HEK293 (cell line): ENCODE measurements at regions of chr10 and their contacts with region 1.

Region 1: GRCh38 chr10:7121154-7121810 is 289.6 kb downstream of the SFMBT2 start:
- H3K4me3 ChIP-seq: no peak overlapping the region
- H3K27ac ChIP-seq: no peak overlapping the region
- H3K4me1 ChIP-seq: no peaks in the 10 kb centered on the region
- CTCF ChIP-seq: no peak

Region 2: DNA sequence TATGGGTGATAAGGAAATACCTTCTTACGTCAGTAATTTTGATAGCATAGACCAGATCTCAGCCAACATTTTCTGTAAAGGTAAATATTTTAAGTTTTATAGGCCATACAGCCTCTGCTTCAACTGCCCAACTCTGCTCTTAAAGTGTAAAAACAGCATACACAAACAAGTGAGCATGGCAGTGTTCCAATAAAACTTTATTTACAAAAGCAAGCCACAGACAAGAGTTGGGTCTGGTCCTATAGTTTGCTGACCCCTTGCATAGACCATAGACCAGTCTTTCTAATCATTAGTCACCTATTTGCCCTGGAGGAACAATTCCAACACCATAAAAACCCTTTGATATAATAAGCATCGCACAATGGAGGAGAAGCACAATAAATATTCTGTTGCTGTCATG is 109.3 kb before region 1 on chr10:
- CTCF ChIA-PET with region 1: no interaction called
- POLR2A ChIA-PET with region 1: no interaction called
- H3K4me3 ChIP-seq: no peak overlapping the region
- H3K27ac ChIP-seq: no peak overlapping the region
- H3K4me1 ChIP-seq: 0 out of 2 replicates have a peak, but pooled peaks cover 2% of the 10 kb centered on the region
- CTCF ChIP-seq: no peak

Region 3: DNA sequence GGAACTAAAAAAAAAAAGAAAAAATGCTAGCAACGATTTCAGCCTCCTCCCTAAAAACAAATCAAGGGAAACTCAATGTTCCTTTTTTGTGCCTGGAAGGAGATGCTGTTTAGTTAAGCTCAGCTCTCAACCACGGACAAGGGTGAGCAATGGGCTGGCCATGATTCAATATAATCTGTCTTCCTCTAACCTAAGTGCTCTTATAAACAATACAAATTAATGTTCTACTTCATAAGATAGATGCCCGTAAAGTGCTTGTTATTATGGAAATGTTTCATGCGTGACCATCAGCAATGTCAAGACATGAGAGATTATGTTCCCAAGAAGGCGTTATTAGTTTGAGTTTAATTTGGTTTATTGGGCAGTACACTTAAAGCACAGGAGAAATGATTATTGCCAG is 30.8 kb before region 1 on chr10:
- CTCF ChIA-PET with region 1: interaction called, 15 read pairs
- POLR2A ChIA-PET with region 1: no interaction called
- H3K4me3 ChIP-seq: no peak overlapping the region
- H3K27ac ChIP-seq: no peak overlapping the region
- H3K4me1 ChIP-seq: no peaks in the 10 kb centered on the region
- CTCF ChIP-seq: no peak

Region 4: DNA sequence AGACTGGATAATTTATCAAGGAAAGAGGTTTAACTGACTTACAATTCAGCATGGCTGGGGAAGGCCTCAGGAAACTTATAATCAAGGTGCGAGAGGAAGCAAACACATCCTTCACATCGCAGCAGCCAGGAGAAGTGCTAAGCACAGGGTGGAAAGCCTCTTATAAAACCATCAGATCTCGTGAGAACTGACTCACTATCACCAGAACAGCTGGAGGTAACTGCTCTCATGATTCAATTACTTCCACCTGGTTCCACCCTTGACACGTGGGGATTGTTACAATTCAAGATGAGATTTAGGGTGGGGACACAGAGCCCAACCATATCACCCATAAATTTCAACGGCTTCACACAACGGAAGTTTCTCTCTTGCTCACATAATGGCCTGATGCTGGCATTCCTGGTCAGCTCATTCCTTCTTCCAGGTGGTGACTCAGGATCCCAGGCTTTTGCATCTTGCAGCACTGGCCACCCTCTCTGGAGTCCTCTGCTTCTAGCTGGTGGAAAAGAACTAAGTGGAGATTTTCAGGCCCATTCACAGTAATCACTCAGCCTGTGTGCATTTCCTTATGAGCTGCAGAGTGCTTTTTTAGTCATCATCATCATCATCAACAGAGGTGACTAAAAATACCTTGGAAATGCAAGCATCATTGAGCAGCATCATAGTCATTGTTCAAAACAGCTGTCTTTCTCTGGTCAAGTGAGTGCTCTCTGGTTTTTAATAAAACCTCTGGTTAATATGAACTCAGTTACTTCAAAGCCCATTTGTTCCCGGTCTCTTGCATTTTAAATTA is 18.5 kb before region 1 on chr10:
- CTCF ChIA-PET with region 1: interaction called, 13 read pairs
- POLR2A ChIA-PET with region 1: no interaction called
- H3K4me3 ChIP-seq: no peak overlapping the region
- H3K27ac ChIP-seq: no peak overlapping the region
- H3K4me1 ChIP-seq: no peaks in the 10 kb centered on the region
- CTCF ChIP-seq: no peak

Region 5: DNA sequence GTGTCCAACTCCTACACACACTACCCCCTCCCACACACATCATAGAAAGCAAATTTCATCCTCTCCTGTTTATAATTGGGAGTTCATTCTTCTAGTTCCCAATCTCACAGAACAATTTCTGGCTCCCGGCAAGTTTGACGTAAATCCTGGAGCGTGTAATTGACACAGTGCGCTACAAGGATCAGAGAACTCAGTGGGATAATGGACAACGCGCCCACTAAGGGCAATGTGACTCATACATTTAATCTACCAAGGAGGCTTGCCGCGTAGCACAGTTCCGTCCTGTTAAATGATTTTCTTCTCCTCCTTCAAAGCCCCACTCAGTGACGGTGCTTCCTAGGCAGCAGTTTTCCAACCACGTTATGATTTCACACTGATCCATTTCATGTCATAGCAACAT is 12.0 kb after region 1 on chr10:
- CTCF ChIA-PET with region 1: interaction called, 13 read pairs
- POLR2A ChIA-PET with region 1: no interaction called
- H3K4me3 ChIP-seq: no peak overlapping the region
- H3K27ac ChIP-seq: no peak overlapping the region
- H3K4me1 ChIP-seq: peaks cover 2% of the 10 kb centered on the region; the same call in 1 of the 2 replicates
- CTCF ChIP-seq: no peak

Region 6: DNA sequence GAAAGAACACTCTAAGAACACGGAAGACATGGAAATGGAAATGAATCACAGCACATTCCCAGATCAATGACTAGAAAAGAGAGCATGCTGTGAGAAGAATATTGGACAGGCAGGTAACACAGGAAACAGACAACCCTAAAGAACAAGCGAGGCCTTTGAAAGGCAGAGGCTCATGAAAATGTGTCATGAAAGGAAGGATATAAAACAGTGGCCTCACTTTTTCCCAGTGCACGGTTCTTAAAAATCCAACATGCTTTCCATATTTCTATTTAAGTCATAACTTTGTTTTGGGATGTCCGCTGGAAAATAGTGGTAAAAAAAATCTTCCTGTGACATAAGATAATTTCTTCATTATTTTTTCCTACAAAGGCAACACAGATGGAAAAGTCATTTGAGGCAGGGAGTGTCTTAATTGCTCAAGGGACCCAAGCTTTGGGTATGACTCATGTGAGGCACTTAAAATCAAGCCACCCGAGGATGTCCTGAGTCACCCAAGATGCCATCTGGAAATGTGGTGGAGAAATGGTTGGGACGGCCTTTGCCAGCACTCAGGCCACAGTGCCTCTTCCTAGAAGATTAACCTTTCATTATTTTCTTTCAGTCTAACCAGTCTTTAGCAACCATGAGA is 528.5 kb after region 1 on chr10:
- CTCF ChIA-PET with region 1: no interaction called
- POLR2A ChIA-PET with region 1: no interaction called
- H3K4me3 ChIP-seq: no peak overlapping the region
- H3K27ac ChIP-seq: no peak overlapping the region
- H3K4me1 ChIP-seq: no peaks in the 10 kb centered on the region
- CTCF ChIP-seq: no peak